ENCODE measurements at regions of chr2 and their contacts with region 1.

Region 1: DNA sequence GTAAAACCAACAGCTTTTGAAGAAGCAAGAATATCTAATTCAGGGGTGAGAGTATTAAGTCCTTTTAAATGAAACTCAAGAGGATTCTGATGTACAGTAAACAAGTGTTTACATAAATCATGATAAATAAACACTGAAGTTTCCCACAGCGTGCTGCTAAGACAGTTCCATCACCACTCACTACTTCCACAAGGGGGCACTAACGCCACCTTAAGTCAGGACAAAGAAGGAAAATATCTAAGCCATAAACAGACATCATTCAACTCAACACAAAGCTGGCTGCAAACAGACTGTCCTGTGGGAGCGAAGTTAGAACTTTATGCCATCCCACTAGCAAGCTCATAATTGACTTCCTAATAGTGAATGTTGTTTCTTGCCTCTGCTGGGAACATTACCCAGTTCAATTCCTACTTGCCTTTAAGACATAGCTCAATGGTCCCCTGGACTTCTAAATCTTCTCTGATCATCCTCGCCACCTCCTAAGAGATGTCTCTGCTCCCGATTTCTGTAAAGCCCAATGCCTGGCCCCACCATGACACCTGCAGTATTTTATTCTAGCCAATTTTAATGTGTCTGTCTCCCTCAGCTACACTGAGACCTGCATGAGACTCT is 36.5 kb downstream of the MRPL44 start:
- DNase-seq: peak in 4 of 5 donors; percentile 33 to 59 (median 52)
- ATAC-seq: peak; percentile 27 to 77 (median 68)
- H3K4me3 ChIP-seq: no peak overlapping the region
- H3K27ac ChIP-seq: no peak overlapping the region
- H3K4me1 ChIP-seq: peaks cover 0 to 6% (median 0%) of the 10 kb centered on the region in 12 donors
- H3K27me3 ChIP-seq: no peaks in the 10 kb centered on the region
- CTCF ChIP-seq: peak; percentile 69 to 90 (median 82)
- POLR2A ChIP-seq: no peak

Region 2: GRCh38 chr2:224031358-224031970 is 37.7 kb after region 1 on chr2:
- intact Hi-C with region 1: loop called in 3 of 10 experiments (anchors 5 kb)
- DNase-seq: no peak
- ATAC-seq: no peak
- H3K4me3 ChIP-seq: no peak overlapping the region
- H3K27ac ChIP-seq: no peak overlapping the region
- H3K4me1 ChIP-seq: peaks cover 0 to 13% (median 0%) of the 10 kb centered on the region in 12 donors
- H3K27me3 ChIP-seq: peaks cover 0 to 17% (median 0%) of the 10 kb centered on the region in 9 donors
- CTCF ChIP-seq: no peak
- POLR2A ChIP-seq: no peak

Region 3: GRCh38 chr2:224039124-224039940 is 45.6 kb after region 1 on chr2 and contains the start of gene SERPINE2:
- intact Hi-C with region 1: loop called in 4 of 10 experiments (anchors 2 to 5 kb)
- DNase-seq: peak; percentile 55 to 71 (median 60)
- ATAC-seq: peak; percentile 52 to 82 (median 78)
- H3K4me3 ChIP-seq: peak within 1 kb of the TSS; percentile 56 to 88 (median 70)
- H3K27ac ChIP-seq: peak within 1 kb of the TSS in 11 of 12 donors; percentile 30 to 79 (median 50)
- H3K4me1 ChIP-seq: peaks cover 0 to 28% (median 7%) of the 10 kb centered on the region in 12 donors
- H3K27me3 ChIP-seq: peaks cover 0 to 53% (median 15%) of the 10 kb centered on the region in 9 donors
- CTCF ChIP-seq: peak in 9 of 12 donors; percentile 21 to 54 (median 41)
- POLR2A ChIP-seq: peak in 1 of 2 donors; percentile 36
- total RNA-seq, gene SERPINE2: 10.7 to 61.7 (median 22.1) TPM

Region 4: DNA sequence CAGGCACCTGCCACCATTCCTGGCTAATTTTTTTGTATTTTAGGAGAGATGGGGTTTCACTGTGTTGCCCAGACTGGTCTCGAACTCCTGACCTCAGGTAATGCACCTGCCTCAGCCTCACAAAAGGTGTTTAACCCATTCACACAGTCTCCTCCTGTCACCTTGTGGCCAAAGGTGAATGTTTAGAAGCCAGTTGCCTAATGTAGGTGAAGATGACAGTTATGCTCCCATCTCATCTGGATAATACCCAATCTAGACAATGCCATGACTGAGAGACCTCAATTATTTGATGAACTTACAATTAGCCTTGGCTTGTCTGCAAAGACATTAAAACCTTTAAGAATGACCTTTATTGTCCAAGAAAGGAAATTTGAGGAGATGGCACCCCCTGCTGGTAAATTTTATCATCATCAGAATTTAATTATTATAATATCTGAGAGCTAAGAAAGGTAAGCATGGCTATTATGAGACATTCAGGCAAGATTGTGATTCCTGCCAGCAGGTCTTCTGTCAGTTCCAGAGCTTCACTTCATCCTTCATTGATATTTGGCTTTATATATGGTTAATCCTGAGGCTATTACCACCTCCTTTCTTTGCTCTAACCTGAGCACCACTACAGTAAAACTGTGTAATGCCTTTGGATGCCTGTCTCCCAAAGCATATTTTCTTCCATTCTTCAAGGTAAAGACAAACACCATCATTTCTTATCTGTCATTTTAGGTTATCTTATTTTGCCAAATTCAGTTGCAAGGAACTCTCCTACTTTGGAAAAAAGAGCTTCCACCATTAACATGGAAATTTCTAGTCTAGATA is 290.6 kb after region 1 on chr2:
- intact Hi-C with region 1: loop called (anchors 1 to 5 kb)
- DNase-seq: no peak
- ATAC-seq: peak in 1 of 4 donors; percentile 47
- H3K4me3 ChIP-seq: no peak overlapping the region
- H3K27ac ChIP-seq: no peak overlapping the region
- H3K4me1 ChIP-seq: peaks cover 0 to 15% (median 0%) of the 10 kb centered on the region in 12 donors
- H3K27me3 ChIP-seq: peaks cover 0 to 16% (median 2%) of the 10 kb centered on the region in 9 donors
- CTCF ChIP-seq: peak; percentile 53 to 84 (median 66)
- POLR2A ChIP-seq: no peak

Region 5: DNA sequence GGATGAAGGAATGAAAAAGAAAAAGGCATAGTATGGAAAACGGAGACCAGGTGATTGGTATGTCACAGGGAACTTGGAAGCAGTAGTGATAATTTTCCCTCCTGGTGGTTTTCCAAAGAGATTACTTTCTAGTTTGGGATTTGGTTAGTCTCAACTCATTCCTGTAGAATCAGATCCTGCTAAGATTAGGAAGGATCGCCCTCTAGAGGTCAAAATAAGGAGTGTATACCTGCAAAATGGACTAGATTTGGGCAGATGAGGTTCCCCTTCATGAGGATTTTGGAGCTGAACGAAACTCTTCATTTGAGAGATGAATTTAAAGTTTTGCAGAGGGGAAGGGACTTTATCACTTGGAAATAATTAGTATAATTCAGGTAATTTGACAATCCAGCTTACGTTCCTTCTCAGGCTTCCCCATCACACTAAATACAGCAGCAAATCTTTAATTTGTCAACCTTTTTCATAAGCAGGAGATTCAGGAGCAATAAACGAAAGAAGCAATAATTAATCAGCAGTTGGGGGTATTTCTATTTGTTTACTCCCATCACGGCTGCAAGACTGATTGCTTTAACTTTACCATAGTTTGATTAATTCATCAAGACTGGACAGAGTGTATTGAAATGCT is 657.2 kb after region 1 on chr2:
- intact Hi-C with region 1: loop called in 4 of 10 experiments (anchors 10 kb)
- DNase-seq: no peak
- ATAC-seq: peak in 2 of 4 donors; percentile 52 to 73
- H3K4me3 ChIP-seq: no peak overlapping the region
- H3K27ac ChIP-seq: no peak overlapping the region
- H3K4me1 ChIP-seq: peaks cover 0 to 3% (median 0%) of the 10 kb centered on the region in 12 donors
- H3K27me3 ChIP-seq: peaks cover 0 to 8% (median 0%) of the 10 kb centered on the region in 9 donors
- CTCF ChIP-seq: peak; percentile 67 to 83 (median 77)
- POLR2A ChIP-seq: no peak

Region 6: DNA sequence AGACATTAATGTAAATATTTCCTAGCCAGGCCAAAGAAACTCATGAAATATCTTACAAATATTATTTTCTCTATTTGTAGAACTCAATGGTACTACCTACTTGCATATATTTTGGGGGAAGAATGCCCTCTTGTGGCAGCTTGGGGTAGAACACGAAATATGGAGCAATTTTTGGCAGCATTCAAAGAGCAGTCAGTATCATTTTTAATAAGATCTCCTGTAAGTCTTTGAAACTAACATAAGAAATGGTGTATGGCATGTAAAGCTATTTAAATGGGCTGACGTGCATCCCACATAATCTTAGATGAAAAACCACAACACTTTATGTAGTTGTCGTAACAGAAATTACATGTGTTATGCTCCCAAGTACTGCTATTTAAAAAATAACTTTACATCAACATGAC is 784.7 kb after region 1 on chr2:
- intact Hi-C with region 1: loop called in 1 of 10 experiments (anchors 10 kb)
- DNase-seq: peak in 1 of 5 donors; percentile 15
- ATAC-seq: peak in 1 of 4 donors; percentile 52
- H3K4me3 ChIP-seq: no peak overlapping the region
- H3K27ac ChIP-seq: no peak overlapping the region
- H3K4me1 ChIP-seq: no peaks in the 10 kb centered on the region
- H3K27me3 ChIP-seq: no peaks in the 10 kb centered on the region
- CTCF ChIP-seq: peak; percentile 66 to 84 (median 76)
- POLR2A ChIP-seq: no peak